Cardiac septum (tissue), 1 donor: ENCODE measurements at regions of chr19 and their contacts with region 1.

Region 1: GRCh38 chr19:48290771-48291488 is 21.0 kb downstream of the ZNF114 start:
- DNase-seq: peak; percentile 91

Region 2: GRCh38 chr19:48271531-48272151 is 19.3 kb before region 1 on chr19:
- intact Hi-C with region 1: loop called (anchors 1 kb)
- DNase-seq: no peak